Natural killer cell (primary cell): ENCODE measurements at regions of chr4 and their contacts with region 1.

Region 1: DNA sequence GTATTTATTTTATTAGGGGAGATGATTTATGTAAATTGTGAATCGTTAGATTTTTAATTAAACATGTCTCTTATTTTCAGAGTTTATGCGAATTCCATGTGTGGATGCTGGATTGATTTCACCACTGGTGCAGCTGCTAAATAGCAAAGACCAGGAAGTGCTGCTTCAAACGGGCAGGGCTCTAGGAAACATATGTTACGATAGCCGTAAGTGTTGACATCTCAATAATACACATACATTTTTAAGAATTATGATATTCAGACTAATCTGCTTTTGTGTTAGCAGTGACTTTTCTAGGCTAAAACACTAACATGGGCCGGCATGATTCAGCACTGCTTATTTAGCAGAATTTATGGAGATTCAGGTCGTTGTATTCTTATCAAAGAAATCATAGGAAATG is 91.2 kb downstream of the RAP1GDS1 start:
- DNase-seq: no peak
- ATAC-seq: peak in 2 of 3 donors; percentile 36 to 45
- H3K4me3 ChIP-seq: no peak overlapping the region
- H3K4me3 Mint-ChIP-seq: peak overlapping the region; percentile 65
- H3K27ac ChIP-seq: no peak overlapping the region
- H3K27ac Mint-ChIP-seq: peak overlapping the region; percentile 66 to 77
- H3K4me1 ChIP-seq: no peaks in the 10 kb centered on the region
- H3K4me1 Mint-ChIP-seq: peaks cover 25 to 27% of the 10 kb centered on the region in 2 donors
- H3K27me3 ChIP-seq: no peaks in the 10 kb centered on the region
- H3K27me3 Mint-ChIP-seq: no peaks in the 10 kb centered on the region
- CTCF ChIP-seq: no peak

Region 2: DNA sequence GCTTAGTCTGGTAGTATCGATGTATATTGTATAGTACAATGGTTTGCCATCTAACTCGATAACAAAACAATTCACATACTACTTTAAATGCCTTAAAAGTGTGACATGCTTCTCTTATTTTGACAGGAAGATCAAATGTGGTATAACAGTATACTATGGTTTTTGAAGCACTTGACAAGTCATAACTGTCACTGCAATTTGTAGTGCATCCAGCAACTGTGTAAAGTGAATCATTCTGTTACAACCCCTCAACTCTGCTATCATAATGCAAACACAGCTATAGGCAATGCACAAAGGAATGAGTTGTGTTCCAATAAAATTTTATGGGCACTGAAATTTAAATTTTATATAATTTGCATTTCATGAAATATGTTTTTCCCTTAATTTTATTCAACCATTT is 77.3 kb before region 1 on chr4:
- intact Hi-C with region 1: loop called (anchors 5 kb)
- DNase-seq: no peak
- ATAC-seq: peak; percentile 87 to 95 (median 90)
- H3K4me3 ChIP-seq: no peak overlapping the region
- H3K4me3 Mint-ChIP-seq: peak overlapping the region; percentile 35
- H3K27ac ChIP-seq: no peak overlapping the region
- H3K27ac Mint-ChIP-seq: peak overlapping the region; percentile 27 to 70
- H3K4me1 ChIP-seq: no peaks in the 10 kb centered on the region
- H3K4me1 Mint-ChIP-seq: peaks cover 55% of the 10 kb centered on the region in 2 donors
- H3K27me3 ChIP-seq: no peaks in the 10 kb centered on the region
- H3K27me3 Mint-ChIP-seq: no peaks in the 10 kb centered on the region
- CTCF ChIP-seq: no peak